Right lobe of liver (tissue), 6 donors: ENCODE measurements at regions of chr5 and their contacts with region 1.

Region 1: DNA sequence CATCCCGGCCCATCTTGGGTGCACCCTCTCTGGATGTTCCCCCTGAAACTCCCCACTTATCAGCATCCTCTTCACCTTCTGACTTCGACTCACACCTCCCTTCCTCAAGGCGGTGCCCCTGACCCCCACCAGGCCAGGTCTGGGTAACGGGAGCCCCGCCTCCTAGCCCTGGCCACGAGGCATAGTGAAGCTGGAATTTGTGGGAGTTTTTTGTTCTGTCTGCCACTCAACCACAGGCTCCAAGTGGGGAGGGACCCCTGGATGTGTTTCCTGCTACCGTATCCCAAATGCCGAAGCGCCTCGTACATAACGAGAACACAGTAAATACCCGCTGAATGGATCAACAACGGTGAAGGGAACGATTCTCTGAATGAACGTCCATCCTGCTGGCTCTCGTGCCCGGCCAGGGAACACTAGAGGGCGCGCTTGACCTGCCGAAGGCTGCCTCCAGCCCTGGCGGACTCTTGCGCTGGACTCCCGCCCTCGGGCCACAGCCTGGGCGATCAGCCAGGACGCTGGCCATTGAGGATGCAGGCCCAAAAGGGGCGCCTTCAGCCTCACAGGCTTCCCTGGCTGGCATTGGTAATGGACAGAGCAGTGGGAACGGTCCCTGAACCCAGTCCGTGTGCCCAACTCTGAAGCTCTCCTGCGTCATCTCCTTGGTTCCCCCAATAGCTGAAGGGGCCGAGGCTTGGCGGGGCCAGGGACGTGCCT is 47.3 kb upstream of the PHYKPL start:
- DNase-seq: peak; percentile 93 to 94 (median 93)
- ATAC-seq: peak; percentile 96 to 98 (median 98)
- H3K4me3 ChIP-seq: no peak overlapping the region
- H3K27ac ChIP-seq: no peak overlapping the region
- H3K4me1 ChIP-seq: peaks cover 0 to 6% (median 0%) of the 10 kb centered on the region in 4 donors
- H3K27me3 ChIP-seq: no peaks in the 10 kb centered on the region
- CTCF ChIP-seq: peak; percentile 96 to 97 (median 97)
- POLR2A ChIP-seq: no peak

Region 2: GRCh38 chr5:178542455-178542854 is 262.6 kb after region 1 on chr5:
- intact Hi-C with region 1: loop called in 1 of 2 experiments (anchors 10 kb)
- DNase-seq: peak in 1 of 3 donors; percentile 15
- ATAC-seq: no peak
- H3K4me3 ChIP-seq: no peak overlapping the region
- H3K27ac ChIP-seq: no peak overlapping the region
- H3K4me1 ChIP-seq: no peaks in the 10 kb centered on the region
- H3K27me3 ChIP-seq: no peaks in the 10 kb centered on the region
- CTCF ChIP-seq: no peak
- POLR2A ChIP-seq: no peak

Region 3: DNA sequence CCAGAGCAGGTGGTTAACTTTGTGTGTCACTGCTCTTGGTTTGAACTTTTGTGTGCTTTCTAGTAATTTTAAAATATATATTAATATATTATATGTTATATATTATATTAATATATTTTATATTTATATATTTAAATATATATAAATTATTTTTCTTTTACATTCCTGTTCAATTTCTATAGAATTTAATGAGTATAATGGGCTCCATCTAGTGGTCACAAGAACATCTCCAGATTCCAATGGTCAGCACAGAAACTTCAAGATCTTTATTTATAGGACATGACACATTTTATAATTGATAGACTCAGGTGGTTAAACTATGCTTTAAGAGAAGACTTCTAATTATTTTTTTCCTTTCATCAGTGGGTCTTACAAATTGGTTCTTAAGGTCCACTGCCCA is 271.2 kb after region 1 on chr5:
- intact Hi-C with region 1: loop called (anchors 5 to 10 kb)
- DNase-seq: no peak
- ATAC-seq: peak; percentile 46 to 69 (median 52)
- H3K4me3 ChIP-seq: no peak overlapping the region
- H3K27ac ChIP-seq: no peak overlapping the region
- H3K4me1 ChIP-seq: no peaks in the 10 kb centered on the region
- H3K27me3 ChIP-seq: no peaks in the 10 kb centered on the region
- CTCF ChIP-seq: peak; percentile 45 to 69 (median 58)
- POLR2A ChIP-seq: no peak